ENCODE measurements at regions of chr12 and their contacts with region 1.

Region 1: GRCh38 chr12:12032851-12033588 is 37.7 kb upstream of the BCL2L14 start:
- DNase-seq: peak; percentile 67 to 89 (median 80)
- H3K4me3 ChIP-seq: peak overlapping the region; percentile 24 to 71 (median 53)
- H3K27ac ChIP-seq: peak overlapping the region in 55 of 59 donors; percentile 22 to 90 (median 79)
- H3K27me3 ChIP-seq: no peaks in the 10 kb centered on the region
- CTCF ChIP-seq: peak; percentile 82 to 97 (median 91)

Region 2: GRCh38 chr12:11607313-11608081 is 425.5 kb before region 1 on chr12:
- intact Hi-C with region 1: no loop called
- DNase-seq: no peak
- H3K4me3 ChIP-seq: no peak overlapping the region
- H3K27ac ChIP-seq: no peak overlapping the region
- H3K27me3 ChIP-seq: no peaks in the 10 kb centered on the region
- CTCF ChIP-seq: no peak

Region 3: DNA sequence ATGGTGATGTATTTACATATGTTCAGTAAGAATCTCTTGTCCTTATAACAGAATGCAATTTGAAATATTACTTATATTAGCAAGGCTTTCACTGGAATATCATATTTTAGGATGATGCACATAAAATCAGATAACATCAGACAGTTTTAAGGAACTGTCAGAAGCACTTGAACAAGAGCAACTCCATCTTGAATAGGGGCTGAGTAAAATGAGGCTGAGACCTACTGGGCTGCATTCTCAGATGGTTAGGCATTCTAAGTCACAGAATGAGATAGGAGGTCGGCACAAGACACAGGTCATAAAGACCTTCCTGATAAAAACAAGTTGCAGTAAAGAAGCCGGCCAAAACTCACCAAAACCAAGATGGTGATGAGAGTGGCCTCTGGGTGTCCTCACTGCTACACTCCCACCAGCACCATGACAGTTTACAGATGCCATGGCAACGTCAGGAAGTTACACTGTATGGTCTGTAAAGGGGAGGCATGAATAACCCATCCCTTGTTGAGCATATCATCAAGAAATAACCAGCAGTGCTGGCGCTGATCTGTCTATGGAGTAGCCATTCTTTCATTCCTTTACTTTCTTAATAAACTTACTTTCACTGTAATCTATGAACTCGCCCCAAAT is 411.1 kb before region 1 on chr12:
- intact Hi-C with region 1: loop called in 1 of 2 experiments (anchors 2 kb)
- DNase-seq: peak in 2 of 10 donors; percentile 15 to 35
- H3K4me3 ChIP-seq: no peak overlapping the region
- H3K27ac ChIP-seq: no peak overlapping the region
- H3K27me3 ChIP-seq: no peaks in the 10 kb centered on the region
- CTCF ChIP-seq: peak in 50 of 56 donors; percentile 11 to 70 (median 44)

Region 4: GRCh38 chr12:11822081-11822834 is 210.8 kb before region 1 on chr12:
- intact Hi-C with region 1: loop called in 1 of 2 experiments (anchors 10 kb)
- DNase-seq: no peak
- H3K4me3 ChIP-seq: peak overlapping the region in 2 of 59 donors; percentile 2 to 18
- H3K27ac ChIP-seq: peak overlapping the region in 50 of 59 donors; percentile 1 to 91 (median 55)
- H3K27me3 ChIP-seq: no peaks in the 10 kb centered on the region
- CTCF ChIP-seq: no peak

Region 5: GRCh38 chr12:11958221-11959091 is 74.6 kb before region 1 on chr12:
- intact Hi-C with region 1: no loop called
- DNase-seq: no peak
- H3K4me3 ChIP-seq: no peak overlapping the region
- H3K27ac ChIP-seq: no peak overlapping the region
- H3K27me3 ChIP-seq: no peaks in the 10 kb centered on the region
- CTCF ChIP-seq: no peak